Colonic mucosa (tissue), 4 donors: ENCODE measurements at regions of chr15 and their contacts with region 1.

Region 1: DNA sequence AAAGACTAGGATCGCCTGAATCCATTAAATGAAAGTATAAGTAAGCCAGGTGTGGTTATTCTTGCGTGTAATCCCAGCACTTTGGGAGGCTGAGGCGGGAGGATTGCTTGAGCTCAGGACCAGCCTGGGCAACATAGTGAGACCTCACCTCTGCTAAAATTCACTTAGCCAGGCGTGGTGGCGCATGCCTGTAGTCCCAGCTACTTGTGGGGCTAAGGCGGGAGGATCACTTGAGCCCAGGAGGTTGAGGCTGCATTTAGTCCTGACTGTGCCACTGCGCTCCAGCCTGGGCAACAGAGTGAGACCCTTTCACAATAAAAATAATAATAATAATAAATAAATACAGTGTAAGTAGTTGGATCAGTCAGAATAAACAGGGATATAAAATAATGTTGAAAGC is 25.5 kb upstream of the HYKK start:
- DNase-seq: no peak
- H3K4me3 ChIP-seq: no peak overlapping the region
- H3K27ac ChIP-seq: no peak overlapping the region
- H3K4me1 ChIP-seq: no peaks in the 10 kb centered on the region
- H3K27me3 ChIP-seq: no peaks in the 10 kb centered on the region
- CTCF ChIP-seq: no peak

Region 2: GRCh38 chr15:78308422-78309032 is 173.4 kb before region 1 on chr15:
- intact Hi-C with region 1: loop called (anchors 5 kb)
- DNase-seq: peak; percentile 75
- H3K4me3 ChIP-seq: no peak overlapping the region
- H3K27ac ChIP-seq: no peak overlapping the region
- H3K4me1 ChIP-seq: no peaks in the 10 kb centered on the region
- H3K27me3 ChIP-seq: no peaks in the 10 kb centered on the region
- CTCF ChIP-seq: peak; percentile 91